Activated CD4-positive, alpha-beta memory T cell treated with anti-CD3 and anti-CD28 coated beads, Interleukin-2, amount 10 ng/mL, durations not matched to agents 7 days and 5 days (primary cell): ENCODE measurements at regions of chr9 and their contacts with region 1.

Region 1: DNA sequence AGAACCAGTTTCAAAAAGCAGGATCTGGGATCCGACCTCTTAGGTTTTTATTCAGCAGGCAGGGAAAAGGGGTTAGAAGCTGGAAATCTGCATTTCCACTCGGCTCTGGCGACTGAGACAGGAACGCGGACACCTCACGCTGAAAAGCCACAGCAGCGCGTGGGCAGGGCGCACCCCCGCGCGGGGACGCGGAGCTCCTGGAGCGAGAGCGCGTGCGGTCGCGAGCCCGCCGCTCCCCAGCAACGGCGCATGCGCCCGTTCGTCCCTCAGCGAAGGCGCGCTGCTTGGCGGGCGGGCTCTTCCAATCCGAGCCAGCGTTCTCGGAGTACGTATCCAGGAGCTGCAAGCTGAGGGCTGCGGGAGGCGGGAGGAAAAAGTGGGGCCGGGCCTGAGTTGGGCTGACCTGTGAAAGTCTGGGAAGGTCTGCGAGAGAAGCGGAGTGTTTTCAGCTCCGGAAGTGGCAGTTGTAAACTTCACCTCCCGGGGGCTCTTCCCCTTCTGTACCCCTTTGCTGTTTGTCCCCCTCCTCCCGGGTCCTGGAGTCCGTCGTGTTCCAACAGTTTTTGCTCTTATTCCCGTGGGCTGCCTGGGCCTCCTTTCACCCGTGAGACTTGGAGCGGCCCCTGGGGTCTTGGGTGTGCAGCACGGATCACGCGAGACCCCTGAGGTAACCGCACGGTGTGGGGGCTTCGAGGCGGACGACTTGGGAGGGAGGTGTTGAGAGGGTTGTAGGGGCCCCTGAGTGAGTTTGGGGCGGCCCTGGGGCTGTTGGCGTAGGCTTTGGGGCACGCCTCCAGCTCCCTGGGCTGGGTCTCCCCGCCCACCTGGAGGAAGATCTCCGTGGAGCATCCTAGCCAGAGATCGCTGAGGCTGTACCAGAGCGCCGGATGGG is at the start of gene CCDC171:
- DNase-seq: peak; percentile 89
- H3K4me3 Mint-ChIP-seq: peak within 1 kb of the TSS; percentile 86
- H3K27ac Mint-ChIP-seq: peak within 1 kb of the TSS; percentile 76
- H3K4me1 Mint-ChIP-seq: peaks cover 19% of the 10 kb centered on the region
- H3K27me3 Mint-ChIP-seq: peaks cover 6% of the 10 kb centered on the region
- total RNA-seq, gene CCDC171: 2.1 to 2.5 TPM

Region 2: GRCh38 chr9:15403155-15403554 is 149.7 kb before region 1 on chr9:
- CTCF ChIA-PET with region 1: no interaction called
- POLR2A ChIA-PET with region 1: no interaction called
- DNase-seq: no peak
- H3K4me3 Mint-ChIP-seq: no peak overlapping the region
- H3K27ac Mint-ChIP-seq: no peak overlapping the region
- H3K4me1 Mint-ChIP-seq: no peaks in the 10 kb centered on the region
- H3K27me3 Mint-ChIP-seq: no peaks in the 10 kb centered on the region

Region 3: DNA sequence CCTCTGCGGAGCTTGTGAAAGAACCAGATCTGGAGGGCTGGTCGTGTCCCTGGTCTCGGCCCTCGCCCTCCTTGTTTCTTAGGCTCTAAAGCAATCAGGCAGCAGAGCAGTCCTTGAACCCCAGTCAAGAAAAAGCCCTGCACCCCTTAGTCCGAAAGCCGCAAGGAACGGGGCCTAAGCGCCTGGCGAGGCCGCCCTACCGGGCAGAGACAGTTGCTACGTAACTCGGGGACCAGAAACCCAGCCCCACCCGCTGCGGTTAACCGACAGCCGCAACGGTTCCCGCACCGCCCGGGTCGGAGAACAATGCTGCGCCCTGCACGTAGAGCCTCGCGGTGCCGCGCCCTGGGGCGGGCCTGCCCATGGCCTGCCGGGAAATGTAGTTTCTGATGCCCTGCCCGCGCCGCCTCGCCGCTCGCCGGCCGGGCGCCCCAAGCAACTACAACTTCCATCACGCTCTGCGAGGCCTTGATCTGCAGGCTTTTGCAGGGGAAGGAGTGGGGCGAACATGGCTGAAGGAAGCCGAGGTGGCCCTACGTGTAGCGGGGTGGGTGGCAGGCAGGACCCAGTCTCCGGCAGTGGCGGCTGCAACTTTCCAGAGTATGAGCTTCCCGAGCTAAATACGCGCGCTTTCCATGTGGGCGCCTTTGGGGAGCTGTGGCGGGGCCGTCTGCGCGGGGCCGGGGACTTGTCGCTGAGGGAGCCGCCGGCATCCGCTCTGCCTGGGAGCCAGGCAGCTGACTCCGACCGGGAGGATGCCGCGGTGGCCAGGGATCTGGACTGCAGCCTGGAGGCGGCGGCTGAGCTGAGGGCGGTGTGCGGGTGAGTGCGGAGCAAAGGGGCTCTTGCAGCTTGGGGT is 130.3 kb before region 1 on chr9 and contains the start of gene SNAPC3:
- CTCF ChIA-PET with region 1: no interaction called
- POLR2A ChIA-PET with region 1: interaction called, 13 read pairs
- DNase-seq: peak; percentile 96
- H3K4me3 Mint-ChIP-seq: peak within 1 kb of the TSS; percentile 93
- H3K27ac Mint-ChIP-seq: peak within 1 kb of the TSS; percentile 83
- H3K4me1 Mint-ChIP-seq: peaks cover 40% of the 10 kb centered on the region
- H3K27me3 Mint-ChIP-seq: peaks cover 6% of the 10 kb centered on the region
- total RNA-seq, gene SNAPC3: 35.6 to 37.5 TPM

Region 4: DNA sequence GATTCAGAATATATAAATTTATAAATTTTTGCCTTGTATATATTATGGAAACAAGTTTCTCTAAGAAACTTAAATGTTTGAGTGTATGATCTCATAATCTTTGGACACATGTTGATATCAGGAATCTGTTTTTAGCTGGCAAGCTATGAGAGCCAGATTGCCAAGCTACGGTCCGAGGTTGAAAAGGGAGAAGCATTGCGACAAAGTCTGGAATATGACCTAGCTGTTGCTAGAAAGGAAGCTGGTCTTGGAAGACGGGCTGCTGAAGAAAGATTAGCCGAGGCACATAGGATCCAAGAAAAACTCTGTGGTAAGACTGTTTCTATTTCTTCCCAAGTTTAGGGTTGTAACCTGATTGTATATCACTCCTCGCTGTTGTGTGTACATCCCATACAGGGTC is 25.8 kb after region 1 on chr9:
- CTCF ChIA-PET with region 1: no interaction called
- POLR2A ChIA-PET with region 1: no interaction called
- DNase-seq: no peak
- H3K4me3 Mint-ChIP-seq: no peak overlapping the region
- H3K27ac Mint-ChIP-seq: no peak overlapping the region
- H3K4me1 Mint-ChIP-seq: no peaks in the 10 kb centered on the region
- H3K27me3 Mint-ChIP-seq: no peaks in the 10 kb centered on the region

Region 5: DNA sequence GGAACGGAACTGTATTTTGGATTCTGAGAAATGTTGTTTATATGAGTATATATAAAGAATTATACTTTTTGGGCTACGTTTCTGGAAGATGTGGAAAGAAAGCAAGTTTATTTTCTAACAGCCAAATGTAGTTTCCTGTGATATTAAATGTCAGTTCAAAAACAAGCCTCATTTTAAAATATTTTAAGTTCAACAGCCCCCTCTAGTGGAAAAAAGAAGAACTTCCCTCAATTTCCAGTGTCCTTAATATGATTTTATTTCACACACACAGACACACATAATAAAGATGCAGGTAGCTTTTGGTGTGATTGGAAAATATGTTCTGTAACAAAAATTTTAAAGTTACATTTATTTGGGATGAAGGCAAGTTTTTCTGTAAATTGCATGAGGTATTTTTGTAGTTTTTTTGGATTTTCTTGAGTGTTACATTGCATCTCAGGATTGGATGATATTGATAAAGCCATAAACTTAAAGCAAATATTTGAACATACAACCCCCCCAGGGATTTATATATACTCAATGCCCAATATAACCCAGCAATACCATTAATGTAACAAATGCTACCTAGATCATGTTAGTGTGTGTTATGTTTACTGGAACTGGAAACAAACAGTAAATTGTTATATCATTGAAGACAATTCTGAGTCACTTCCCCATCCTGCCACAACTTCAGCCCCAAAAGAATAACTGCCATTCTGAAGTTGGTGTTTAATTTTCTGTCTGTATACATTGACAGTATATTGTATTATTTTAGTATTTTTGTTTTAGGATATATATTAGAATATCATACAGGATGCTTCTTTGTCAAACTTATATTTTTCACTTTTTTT is 54.0 kb after region 1 on chr9:
- CTCF ChIA-PET with region 1: interaction called, 16 read pairs
- POLR2A ChIA-PET with region 1: interaction called, 10 read pairs
- DNase-seq: no peak
- H3K4me3 Mint-ChIP-seq: no peak overlapping the region
- H3K27ac Mint-ChIP-seq: peak overlapping the region; percentile 40
- H3K4me1 Mint-ChIP-seq: peaks cover 20% of the 10 kb centered on the region
- H3K27me3 Mint-ChIP-seq: no peaks in the 10 kb centered on the region